ENCODE measurements at regions of chr10 and their contacts with region 1.

Region 1: GRCh38 chr10:44788147-44789129 is 122.7 kb upstream of the TMEM72 start:
- DNase-seq: no peak
- H3K4me3 ChIP-seq: no peak overlapping the region
- H3K27ac ChIP-seq: no peak overlapping the region
- H3K4me1 ChIP-seq: peaks cover 13% of the 10 kb centered on the region
- H3K27me3 ChIP-seq: no peaks in the 10 kb centered on the region
- CTCF ChIP-seq: no peak
- POLR2A ChIP-seq: no peak

Region 2: GRCh38 chr10:44513591-44513990 is 274.8 kb before region 1 on chr10:
- intact Hi-C with region 1: no loop called
- DNase-seq: no peak
- H3K4me3 ChIP-seq: no peak overlapping the region
- H3K27ac ChIP-seq: no peak overlapping the region
- H3K4me1 ChIP-seq: no peaks in the 10 kb centered on the region
- H3K27me3 ChIP-seq: no peaks in the 10 kb centered on the region
- CTCF ChIP-seq: no peak
- POLR2A ChIP-seq: no peak

Region 3: GRCh38 chr10:44757551-44758205 is 30.8 kb before region 1 on chr10:
- intact Hi-C with region 1: loop called (anchors 1 kb)
- DNase-seq: no peak
- H3K4me3 ChIP-seq: no peak overlapping the region
- H3K27ac ChIP-seq: no peak overlapping the region
- H3K4me1 ChIP-seq: peaks cover 6% of the 10 kb centered on the region
- H3K27me3 ChIP-seq: no peaks in the 10 kb centered on the region
- CTCF ChIP-seq: no peak
- POLR2A ChIP-seq: no peak

Region 4: GRCh38 chr10:45265995-45266394 is 477.6 kb after region 1 on chr10:
- intact Hi-C with region 1: no loop called
- DNase-seq: no peak
- H3K4me3 ChIP-seq: no peak overlapping the region
- H3K27ac ChIP-seq: no peak overlapping the region
- H3K4me1 ChIP-seq: no peaks in the 10 kb centered on the region
- H3K27me3 ChIP-seq: no peaks in the 10 kb centered on the region
- CTCF ChIP-seq: no peak
- POLR2A ChIP-seq: no peak

Measured in vagina (tissue), 2 donors.